Activated naive CD4-positive, alpha-beta T cell treated with anti-CD3 and anti-CD28 coated beads, Interleukin-2, amount 10 ng/mL, durations not matched to agents 7 days and 5 days (primary cell): ENCODE measurements at regions of chr21 and their contacts with region 1.

Region 1: DNA sequence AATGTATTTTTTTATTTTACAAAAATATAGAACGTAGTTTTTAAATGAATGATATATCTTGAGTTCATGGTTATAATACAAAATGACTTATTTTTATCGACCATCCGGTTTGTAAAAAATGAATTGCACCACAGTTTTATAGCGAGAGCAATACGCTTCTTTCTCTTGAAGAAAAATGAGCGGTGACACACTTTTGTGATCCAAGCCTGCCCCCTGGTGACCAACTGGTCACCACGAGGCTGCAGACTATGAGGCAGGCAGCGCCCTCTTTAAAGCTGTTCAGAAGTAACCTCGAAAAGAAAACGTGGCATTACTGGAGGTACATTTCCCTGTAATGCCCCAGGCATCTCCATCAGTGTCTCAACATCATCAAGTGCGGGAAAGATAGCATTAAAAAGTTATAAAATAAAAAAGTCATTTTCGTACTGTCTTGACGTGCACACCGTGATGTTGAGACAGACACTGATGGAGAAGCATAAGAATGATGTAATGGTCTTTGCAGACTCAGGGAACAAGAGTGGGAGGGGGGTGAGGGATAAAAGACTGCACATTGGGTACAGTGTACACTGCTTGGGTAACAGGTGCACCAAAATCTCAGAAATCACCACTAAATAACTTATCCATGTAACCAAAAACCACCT is 734.2 kb upstream of the ADAMTS5 start:
- DNase-seq: peak; percentile 71
- H3K4me3 Mint-ChIP-seq: no peak overlapping the region
- H3K27ac Mint-ChIP-seq: no peak overlapping the region
- H3K4me1 Mint-ChIP-seq: no peaks in the 10 kb centered on the region
- H3K27me3 Mint-ChIP-seq: no peaks in the 10 kb centered on the region

Region 2: DNA sequence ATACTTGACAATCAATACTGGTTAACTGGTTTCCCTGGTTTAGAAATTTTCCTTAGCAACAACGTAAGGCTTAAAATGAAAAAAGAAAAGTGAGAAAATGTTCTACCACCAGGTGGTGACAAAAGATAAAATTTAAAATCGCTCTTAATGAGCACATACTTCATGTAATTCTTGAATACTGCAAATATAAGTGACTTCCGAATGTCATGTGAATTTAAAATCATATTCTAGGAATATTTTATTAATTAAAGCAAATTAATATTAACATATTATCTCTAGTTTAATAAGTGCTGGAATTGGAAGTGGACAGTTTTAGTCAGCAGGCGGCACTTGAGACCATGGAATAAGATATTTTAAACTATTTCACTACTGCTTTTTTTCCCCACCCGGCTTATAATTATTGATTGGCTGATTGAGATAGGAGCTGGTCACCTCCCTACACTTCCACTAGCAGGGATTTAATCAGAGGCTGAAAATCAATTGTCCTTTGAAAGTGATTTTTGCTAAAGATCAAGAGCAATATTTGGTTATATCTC is 850.9 kb before region 1 on chr21:
- CTCF ChIA-PET with region 1: interaction called, 12 read pairs
- DNase-seq: no peak
- H3K4me3 Mint-ChIP-seq: no peak overlapping the region
- H3K27ac Mint-ChIP-seq: no peak overlapping the region
- H3K4me1 Mint-ChIP-seq: peaks cover 19% of the 10 kb centered on the region
- H3K27me3 Mint-ChIP-seq: peaks cover 37% of the 10 kb centered on the region

Region 3: GRCh38 chr21:27536319-27536718 is 164.8 kb before region 1 on chr21:
- CTCF ChIA-PET with region 1: no interaction called
- DNase-seq: no peak
- H3K4me3 Mint-ChIP-seq: no peak overlapping the region
- H3K27ac Mint-ChIP-seq: no peak overlapping the region
- H3K4me1 Mint-ChIP-seq: no peaks in the 10 kb centered on the region
- H3K27me3 Mint-ChIP-seq: no peaks in the 10 kb centered on the region

Region 4: DNA sequence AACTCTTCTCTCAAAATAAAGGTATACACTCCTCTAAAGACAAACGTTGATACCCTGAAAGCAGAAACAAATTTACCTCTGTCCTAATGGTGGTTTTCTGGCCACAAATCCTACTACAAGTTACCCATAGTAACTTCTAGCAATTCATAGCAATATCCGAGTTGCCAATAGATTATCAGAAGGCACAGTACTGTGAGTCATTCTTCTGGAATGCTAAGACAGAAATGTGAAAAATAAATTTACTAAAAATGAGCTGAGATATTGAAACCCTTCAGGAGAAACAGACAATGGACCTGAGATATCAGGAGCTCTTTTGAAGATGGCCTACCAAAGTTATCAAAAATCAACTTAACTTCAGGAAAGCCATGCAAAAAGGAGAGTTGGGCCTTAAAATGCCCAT is 19.3 kb before region 1 on chr21:
- CTCF ChIA-PET with region 1: no interaction called
- DNase-seq: no peak
- H3K4me3 Mint-ChIP-seq: no peak overlapping the region
- H3K27ac Mint-ChIP-seq: no peak overlapping the region
- H3K4me1 Mint-ChIP-seq: no peaks in the 10 kb centered on the region
- H3K27me3 Mint-ChIP-seq: no peaks in the 10 kb centered on the region

Region 5: DNA sequence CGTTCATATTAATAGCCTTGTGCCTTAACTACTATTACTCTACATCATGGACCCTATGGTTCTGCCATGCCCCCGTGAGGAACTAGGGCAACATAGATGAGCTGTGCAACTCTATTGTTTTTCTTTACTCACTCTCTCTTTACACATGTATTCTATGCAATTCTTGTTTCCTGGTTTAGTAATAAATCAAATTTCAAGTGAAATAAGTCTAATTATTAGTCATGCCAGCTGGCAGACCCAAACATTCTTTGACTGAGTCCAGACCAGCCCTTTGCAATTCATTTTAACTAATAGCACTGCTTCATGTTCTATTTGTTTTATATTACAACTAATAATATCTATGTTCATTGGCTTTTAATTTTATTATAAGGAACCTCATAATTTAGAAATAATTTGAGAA is 55.1 kb after region 1 on chr21:
- CTCF ChIA-PET with region 1: no interaction called
- DNase-seq: no peak
- H3K4me3 Mint-ChIP-seq: no peak overlapping the region
- H3K27ac Mint-ChIP-seq: no peak overlapping the region
- H3K4me1 Mint-ChIP-seq: no peaks in the 10 kb centered on the region
- H3K27me3 Mint-ChIP-seq: no peaks in the 10 kb centered on the region